Activated naive CD4-positive, alpha-beta T cell treated with anti-CD3 and anti-CD28 coated beads for 36 hours (primary cell): ENCODE measurements at regions of chr6 and their contacts with region 1.

Region 1: DNA sequence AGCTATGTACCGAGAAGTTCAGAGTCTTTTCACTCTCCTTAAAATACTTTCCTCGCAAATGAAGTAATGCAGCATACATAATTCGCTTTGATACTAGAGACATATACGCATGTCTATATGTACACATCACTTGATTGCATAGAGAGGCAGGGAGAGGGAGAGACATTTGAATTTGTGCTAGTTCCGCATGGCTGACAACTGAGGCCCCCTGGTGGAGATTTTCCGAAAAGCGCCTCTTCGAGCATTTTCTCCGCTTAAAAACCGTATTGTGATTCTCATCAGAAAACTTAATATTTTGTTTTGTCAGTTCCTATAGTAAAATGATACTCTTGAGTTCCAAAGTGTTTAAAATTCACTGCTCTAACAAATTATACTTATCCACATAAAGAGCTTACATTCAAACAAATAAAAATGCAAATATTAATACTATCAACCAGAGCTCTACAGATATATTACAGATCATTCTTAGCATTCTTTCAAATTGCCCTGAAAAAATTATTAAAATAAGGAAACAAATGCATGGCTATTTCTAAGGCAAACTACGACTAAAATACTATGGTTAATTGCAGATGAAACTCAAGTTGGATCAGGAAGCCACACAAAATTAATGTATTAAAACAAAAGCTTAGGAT is 637 bp downstream of the MYLK4 start:
- DNase-seq: peak; percentile 83
- H3K4me3 Mint-ChIP-seq: no peak overlapping the region
- H3K27ac Mint-ChIP-seq: no peak overlapping the region
- H3K4me1 Mint-ChIP-seq: no peaks in the 10 kb centered on the region
- H3K27me3 Mint-ChIP-seq: peaks cover 8% of the 10 kb centered on the region

Region 2: GRCh38 chr6:2738373-2738979 is 11.6 kb before region 1 on chr6:
- CTCF ChIA-PET with region 1: interaction called, 66 read pairs
- intact Hi-C with region 1: loop called (anchors 1 kb)
- DNase-seq: peak; percentile 77
- H3K4me3 Mint-ChIP-seq: no peak overlapping the region
- H3K27ac Mint-ChIP-seq: no peak overlapping the region
- H3K4me1 Mint-ChIP-seq: peaks cover 5% of the 10 kb centered on the region
- H3K27me3 Mint-ChIP-seq: no peaks in the 10 kb centered on the region

Region 3: DNA sequence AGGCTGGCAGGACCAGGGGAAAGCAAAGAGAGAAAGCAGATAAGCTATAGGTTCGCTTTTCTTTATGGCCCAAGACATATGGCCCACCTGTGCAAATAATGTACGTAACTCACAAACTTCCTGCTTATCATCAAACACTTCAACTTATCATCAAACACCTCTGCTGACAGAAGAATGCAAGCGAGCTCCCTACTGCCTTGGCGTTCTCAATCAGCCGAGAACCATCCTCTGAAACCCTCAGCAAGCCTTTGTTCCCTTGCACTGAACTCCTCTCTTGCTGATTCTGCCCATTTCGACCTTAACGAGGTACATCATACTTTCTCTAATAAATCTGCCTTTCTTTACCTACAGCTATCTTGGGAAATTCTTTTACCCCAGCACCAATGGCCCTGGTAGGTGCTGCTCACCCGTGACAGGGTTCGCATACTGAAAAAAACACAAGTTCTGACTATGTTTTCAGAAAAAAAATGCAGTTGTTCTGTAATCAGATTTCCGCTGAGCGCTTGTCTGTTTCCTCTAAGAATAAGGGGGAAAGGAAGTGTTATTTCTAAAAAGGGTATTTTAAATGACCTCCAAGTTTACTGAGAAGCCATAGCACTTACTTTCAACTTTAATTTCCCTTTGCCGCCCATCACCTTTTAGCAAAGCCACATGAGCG is 193.0 kb after region 1 on chr6:
- CTCF ChIA-PET with region 1: no interaction called
- intact Hi-C with region 1: no loop called
- DNase-seq: peak; percentile 33
- H3K4me3 Mint-ChIP-seq: peak overlapping the region; percentile 60
- H3K27ac Mint-ChIP-seq: peak overlapping the region; percentile 66
- H3K4me1 Mint-ChIP-seq: peaks cover 51% of the 10 kb centered on the region
- H3K27me3 Mint-ChIP-seq: no peaks in the 10 kb centered on the region

Region 4: DNA sequence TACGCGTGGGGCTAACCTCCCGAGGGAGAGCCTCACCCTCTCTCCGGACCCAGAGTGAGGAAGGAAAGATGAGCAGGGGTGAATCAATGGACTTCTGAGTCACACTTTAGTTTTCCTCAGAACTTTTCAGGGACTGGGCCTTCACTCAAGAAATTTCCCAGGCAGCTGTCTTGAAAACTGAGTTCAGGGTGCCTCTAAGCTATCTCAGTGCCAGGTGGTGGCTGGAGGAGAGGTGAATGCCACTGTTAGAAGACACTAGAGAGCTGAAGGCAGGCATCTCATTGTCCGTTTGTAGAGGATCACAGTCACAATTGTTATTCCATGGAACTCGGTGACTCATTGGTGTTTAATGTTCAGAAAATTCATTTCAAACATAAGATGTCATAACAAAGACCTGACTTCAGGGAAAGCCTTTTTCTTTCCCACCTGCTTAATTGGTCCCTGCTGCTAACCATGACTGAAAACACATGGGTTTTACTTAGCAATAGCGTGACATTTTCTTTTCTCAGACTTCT is 226.5 kb after region 1 on chr6:
- CTCF ChIA-PET with region 1: no interaction called
- intact Hi-C with region 1: no loop called
- DNase-seq: no peak
- H3K4me3 Mint-ChIP-seq: no peak overlapping the region
- H3K27ac Mint-ChIP-seq: no peak overlapping the region
- H3K4me1 Mint-ChIP-seq: peaks cover 19% of the 10 kb centered on the region
- H3K27me3 Mint-ChIP-seq: peaks cover 4% of the 10 kb centered on the region